Naive thymus-derived CD4-positive, alpha-beta T cell (primary cell): ENCODE measurements at regions of chr4 and their contacts with region 1.

Region 1: DNA sequence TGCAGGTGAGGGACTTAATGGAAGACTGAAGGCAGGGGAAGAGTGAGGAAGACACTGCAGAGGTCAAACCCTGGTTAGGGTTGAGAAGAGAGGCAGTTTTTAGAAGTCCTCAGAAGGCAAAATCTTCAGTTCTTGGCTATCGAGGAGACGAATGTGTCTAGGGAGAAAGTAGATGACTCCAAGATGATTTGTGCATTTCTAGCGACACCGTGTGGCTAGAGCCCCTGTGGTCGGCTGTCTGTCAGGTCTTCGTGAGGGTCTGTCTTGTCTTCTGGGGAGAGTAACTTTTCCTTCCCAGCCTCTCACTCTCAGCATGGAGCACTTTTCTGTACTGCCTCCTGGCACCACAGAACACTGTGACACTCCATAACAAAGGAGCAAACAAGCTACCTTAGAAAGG is 458.1 kb downstream of the STIM2 start:
- DNase-seq: peak in 1 of 9 donors; percentile 21
- ATAC-seq: no peak
- H3K4me3 ChIP-seq: no peak overlapping the region
- H3K4me3 Mint-ChIP-seq: no peak overlapping the region
- H3K27ac ChIP-seq: no peak overlapping the region
- H3K27ac Mint-ChIP-seq: peak overlapping the region in 1 of 9 donors; percentile 65
- H3K4me1 ChIP-seq: no peaks in the 10 kb centered on the region
- H3K4me1 Mint-ChIP-seq: no peaks in the 10 kb centered on the region
- H3K27me3 ChIP-seq: no peaks in the 10 kb centered on the region
- H3K27me3 Mint-ChIP-seq: peaks cover 0 to 16% (median 13%) of the 10 kb centered on the region in 5 donors

Region 2: GRCh38 chr4:26005764-26006163 is 1313.0 kb before region 1 on chr4:
- CTCF ChIA-PET with region 1: no interaction called
- POLR2A ChIA-PET with region 1: no interaction called
- intact Hi-C with region 1: no loop called
- DNase-seq: no peak
- ATAC-seq: no peak
- H3K4me3 ChIP-seq: no peak overlapping the region
- H3K4me3 Mint-ChIP-seq: no peak overlapping the region
- H3K27ac ChIP-seq: no peak overlapping the region
- H3K27ac Mint-ChIP-seq: no peak overlapping the region
- H3K4me1 ChIP-seq: no peaks in the 10 kb centered on the region
- H3K4me1 Mint-ChIP-seq: no peaks in the 10 kb centered on the region
- H3K27me3 ChIP-seq: no peaks in the 10 kb centered on the region
- H3K27me3 Mint-ChIP-seq: peaks cover 9 to 22% (median 13%) of the 10 kb centered on the region in 5 donors

Region 3: GRCh38 chr4:27048429-27049238 is 270.1 kb before region 1 on chr4:
- CTCF ChIA-PET with region 1: no interaction called
- POLR2A ChIA-PET with region 1: no interaction called
- intact Hi-C with region 1: loop called in 1 of 2 experiments (anchors 5 kb)
- DNase-seq: peak in 5 of 9 donors; percentile 28 to 44 (median 32)
- ATAC-seq: peak; percentile 48
- H3K4me3 ChIP-seq: peak overlapping the region; percentile 6
- H3K4me3 Mint-ChIP-seq: peak overlapping the region in 9 of 10 donors; percentile 8 to 79 (median 62)
- H3K27ac ChIP-seq: no peak overlapping the region
- H3K27ac Mint-ChIP-seq: no peak overlapping the region
- H3K4me1 ChIP-seq: no peaks in the 10 kb centered on the region
- H3K4me1 Mint-ChIP-seq: peaks cover 0 to 13% (median 4%) of the 10 kb centered on the region in 7 donors
- H3K27me3 ChIP-seq: no peaks in the 10 kb centered on the region
- H3K27me3 Mint-ChIP-seq: peaks cover 39 to 73% (median 55%) of the 10 kb centered on the region in 5 donors

Region 4: DNA sequence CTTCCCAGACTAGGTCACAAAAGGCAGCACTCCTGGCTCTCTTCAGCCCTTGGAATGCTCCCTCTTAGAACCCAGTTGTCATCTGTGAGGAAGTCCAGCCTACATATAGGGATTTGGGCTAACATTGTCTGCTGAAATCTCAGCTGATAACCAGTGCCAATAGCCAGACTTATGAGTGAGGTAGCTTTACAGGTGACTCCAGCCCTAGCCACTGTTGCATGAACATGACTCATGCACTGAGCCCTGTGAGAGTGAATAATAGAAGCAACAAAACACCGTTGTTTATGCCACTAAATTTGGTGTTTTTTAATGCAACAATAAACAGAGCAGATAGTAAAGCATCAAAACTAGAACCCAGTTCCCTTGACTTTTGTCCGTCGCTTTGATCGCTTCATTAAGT is 24.9 kb before region 1 on chr4:
- CTCF ChIA-PET with region 1: no interaction called
- POLR2A ChIA-PET with region 1: no interaction called
- intact Hi-C with region 1: no loop called
- DNase-seq: no peak
- ATAC-seq: no peak
- H3K4me3 ChIP-seq: no peak overlapping the region
- H3K4me3 Mint-ChIP-seq: no peak overlapping the region
- H3K27ac ChIP-seq: no peak overlapping the region
- H3K27ac Mint-ChIP-seq: no peak overlapping the region
- H3K4me1 ChIP-seq: no peaks in the 10 kb centered on the region
- H3K4me1 Mint-ChIP-seq: no peaks in the 10 kb centered on the region
- H3K27me3 ChIP-seq: no peaks in the 10 kb centered on the region
- H3K27me3 Mint-ChIP-seq: peaks cover 0 to 7% (median 5%) of the 10 kb centered on the region in 5 donors